MCF 10A (cell line): ENCODE measurements at regions of chr1 and their contacts with region 1.

Region 1: GRCh38 chr1:45339789-45340570 is at the starts of genes MUTYH and TOE1:
- DNase-seq: peak; percentile 89
- H3K4me3 Mint-ChIP-seq: peak within 1 kb of the TSS; percentile 93
- H3K27ac Mint-ChIP-seq: peak within 1 kb of the TSS; percentile 93
- H3K4me1 Mint-ChIP-seq: peaks cover 4% of the 10 kb centered on the region
- H3K27me3 Mint-ChIP-seq: no peaks in the 10 kb centered on the region
- CTCF ChIP-seq: no peak
- total RNA-seq, gene MUTYH: 31.2 and 31.3 TPM in 2 replicates
- total RNA-seq, gene TOE1: 11.1 and 13.3 TPM in 2 replicates

Region 2: GRCh38 chr1:45314266-45314665 is 25.7 kb before region 1 on chr1:
- CTCF ChIA-PET with region 1: interaction called, 3 read pairs
- POLR2A ChIA-PET with region 1: interaction called, 10 read pairs
- intact Hi-C with region 1: no loop called
- DNase-seq: no peak
- H3K4me3 Mint-ChIP-seq: no peak overlapping the region
- H3K27ac Mint-ChIP-seq: no peak overlapping the region
- H3K4me1 Mint-ChIP-seq: no peaks in the 10 kb centered on the region
- H3K27me3 Mint-ChIP-seq: no peaks in the 10 kb centered on the region
- CTCF ChIP-seq: no peak

Region 3: DNA sequence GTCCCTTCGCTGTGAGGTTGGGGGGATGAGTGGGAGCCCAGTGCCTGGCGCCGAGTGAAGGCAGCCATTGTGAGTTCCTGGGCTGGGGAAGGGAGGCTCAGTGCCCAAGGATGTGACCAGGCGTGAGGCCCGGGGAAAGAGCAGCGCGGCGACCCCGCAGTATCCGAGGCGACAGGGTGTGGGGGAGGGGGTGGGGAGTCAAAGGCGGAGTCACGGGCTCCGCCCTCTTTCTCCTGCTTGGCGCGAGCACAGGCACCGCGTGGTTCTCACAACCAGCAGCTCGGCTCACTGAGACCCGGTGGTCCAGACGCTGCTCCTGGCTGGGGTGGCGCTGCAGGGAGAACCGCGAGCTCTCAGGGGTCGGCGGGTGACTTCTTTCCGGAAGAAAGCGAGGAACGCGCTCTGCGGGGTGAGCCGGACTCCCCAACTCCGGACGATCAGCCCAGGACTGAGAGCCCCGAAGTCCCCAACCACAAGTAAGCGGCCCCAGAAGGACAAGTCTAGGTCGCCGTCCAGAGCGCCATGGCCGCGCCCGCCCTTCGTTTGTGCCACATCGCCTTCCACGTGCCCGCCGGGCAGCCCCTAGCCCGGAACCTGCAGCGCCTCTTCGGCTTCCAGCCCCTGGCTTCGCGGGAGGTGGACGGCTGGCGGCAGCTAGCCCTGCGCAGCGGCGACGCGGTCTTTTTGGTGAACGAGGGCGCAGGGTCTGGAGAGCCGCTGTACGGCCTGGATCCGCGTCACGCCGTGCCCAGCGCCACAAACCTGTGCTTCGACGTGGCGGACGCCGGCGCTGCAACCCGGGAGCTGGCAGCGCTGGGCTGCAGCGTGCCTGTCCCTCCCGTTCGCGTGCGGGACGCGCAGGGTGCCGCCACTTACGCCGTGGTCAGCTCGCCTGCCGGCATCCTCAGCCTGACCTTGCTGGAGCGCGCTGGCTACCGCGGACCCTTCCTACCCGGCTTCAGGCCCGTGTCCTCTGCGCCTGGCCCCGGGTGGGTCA is 13.1 kb before region 1 on chr1 and contains the start of gene HPDL:
- CTCF ChIA-PET with region 1: interaction called, 3 read pairs
- POLR2A ChIA-PET with region 1: interaction called, 15 read pairs
- intact Hi-C with region 1: no loop called
- DNase-seq: peak; percentile 48
- H3K4me3 Mint-ChIP-seq: peak within 1 kb of the TSS; percentile 70
- H3K27ac Mint-ChIP-seq: no peak within 1 kb of the TSS
- H3K4me1 Mint-ChIP-seq: peaks cover 7% of the 10 kb centered on the region
- H3K27me3 Mint-ChIP-seq: no peaks in the 10 kb centered on the region
- CTCF ChIP-seq: no peak
- total RNA-seq, gene HPDL: 0.37 TPM in 1 of 2 replicates, not detected in the other

Region 4: DNA sequence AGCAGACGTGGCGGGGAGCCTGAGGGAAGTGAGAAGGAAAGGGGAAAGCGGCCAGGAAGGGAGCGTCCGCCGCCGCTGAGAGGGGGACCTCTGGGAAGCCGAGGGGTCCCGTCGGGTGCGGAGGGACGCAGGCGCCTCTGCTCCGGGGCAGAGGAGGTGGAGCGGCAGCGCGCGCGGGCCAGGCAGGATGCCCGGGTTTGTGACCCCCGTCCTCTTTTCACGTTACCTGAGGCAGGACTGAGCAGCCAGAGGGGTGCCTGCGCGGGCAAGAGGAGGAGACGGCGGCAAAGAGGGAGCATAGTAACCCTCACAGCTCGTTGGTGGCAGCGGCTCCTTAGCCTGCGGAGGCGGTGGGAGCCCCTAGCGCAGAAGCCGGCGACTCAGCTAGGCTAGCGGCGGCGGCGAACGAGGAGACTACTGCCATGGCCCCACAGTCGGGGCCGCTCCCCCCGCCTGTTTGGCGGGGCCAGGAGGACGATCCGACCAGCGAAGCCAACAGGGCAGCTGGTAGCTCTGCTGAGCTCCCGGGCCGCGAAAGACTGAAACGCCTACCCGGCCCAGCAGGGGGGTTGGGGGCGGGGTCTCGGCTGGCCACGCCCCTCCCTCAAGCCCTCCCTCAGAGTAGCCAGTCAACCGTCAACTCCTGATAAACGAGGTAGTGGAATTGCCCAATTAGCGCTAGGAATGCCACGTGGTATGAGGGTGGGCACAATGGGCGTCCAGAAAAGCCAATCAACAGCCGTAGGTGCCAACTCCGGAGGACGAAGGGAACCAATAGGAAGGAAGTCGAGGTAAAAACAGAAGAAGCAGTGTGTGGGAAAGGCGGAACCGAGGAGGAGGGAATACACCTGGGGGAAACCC is 150.9 kb after region 1 on chr1 and contains the start of gene TESK2:
- CTCF ChIA-PET with region 1: interaction called, 51 read pairs
- POLR2A ChIA-PET with region 1: interaction called, 45 read pairs
- intact Hi-C with region 1: no loop called
- DNase-seq: peak; percentile 100
- H3K4me3 Mint-ChIP-seq: no peak within 1 kb of the TSS
- H3K27ac Mint-ChIP-seq: no peak within 1 kb of the TSS
- H3K4me1 Mint-ChIP-seq: peaks cover 5% of the 10 kb centered on the region
- H3K27me3 Mint-ChIP-seq: no peaks in the 10 kb centered on the region
- CTCF ChIP-seq: no peak
- total RNA-seq, gene TESK2: 0.71 and 1.4 TPM in 2 replicates

Region 5: DNA sequence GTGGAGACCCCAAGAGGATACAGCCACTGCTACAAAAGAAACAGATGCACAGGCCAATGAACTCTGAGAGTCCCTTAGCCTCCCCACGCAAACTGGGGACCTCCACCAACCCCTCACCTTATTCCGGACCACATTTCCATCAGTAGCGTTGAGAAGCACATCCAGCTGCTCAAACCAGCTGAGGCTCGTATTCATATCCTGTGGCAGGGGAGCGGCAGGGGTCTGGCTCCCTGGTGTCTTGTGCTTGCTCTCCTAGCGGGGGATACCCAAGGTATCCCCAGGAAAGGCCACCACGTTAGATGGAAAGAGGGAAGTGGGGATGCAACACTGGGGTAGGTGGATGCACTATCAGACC is 159.4 kb after region 1 on chr1:
- CTCF ChIA-PET with region 1: interaction called, 51 read pairs
- POLR2A ChIA-PET with region 1: interaction called, 26 read pairs
- intact Hi-C with region 1: no loop called
- DNase-seq: no peak
- H3K4me3 Mint-ChIP-seq: peak overlapping the region; percentile 97
- H3K27ac Mint-ChIP-seq: peak overlapping the region; percentile 94
- H3K4me1 Mint-ChIP-seq: peaks cover 26% of the 10 kb centered on the region
- H3K27me3 Mint-ChIP-seq: no peaks in the 10 kb centered on the region
- CTCF ChIP-seq: no peak